MCF 10A (cell line): ENCODE measurements at regions of chr19 and their contacts with region 1.

Region 1: DNA sequence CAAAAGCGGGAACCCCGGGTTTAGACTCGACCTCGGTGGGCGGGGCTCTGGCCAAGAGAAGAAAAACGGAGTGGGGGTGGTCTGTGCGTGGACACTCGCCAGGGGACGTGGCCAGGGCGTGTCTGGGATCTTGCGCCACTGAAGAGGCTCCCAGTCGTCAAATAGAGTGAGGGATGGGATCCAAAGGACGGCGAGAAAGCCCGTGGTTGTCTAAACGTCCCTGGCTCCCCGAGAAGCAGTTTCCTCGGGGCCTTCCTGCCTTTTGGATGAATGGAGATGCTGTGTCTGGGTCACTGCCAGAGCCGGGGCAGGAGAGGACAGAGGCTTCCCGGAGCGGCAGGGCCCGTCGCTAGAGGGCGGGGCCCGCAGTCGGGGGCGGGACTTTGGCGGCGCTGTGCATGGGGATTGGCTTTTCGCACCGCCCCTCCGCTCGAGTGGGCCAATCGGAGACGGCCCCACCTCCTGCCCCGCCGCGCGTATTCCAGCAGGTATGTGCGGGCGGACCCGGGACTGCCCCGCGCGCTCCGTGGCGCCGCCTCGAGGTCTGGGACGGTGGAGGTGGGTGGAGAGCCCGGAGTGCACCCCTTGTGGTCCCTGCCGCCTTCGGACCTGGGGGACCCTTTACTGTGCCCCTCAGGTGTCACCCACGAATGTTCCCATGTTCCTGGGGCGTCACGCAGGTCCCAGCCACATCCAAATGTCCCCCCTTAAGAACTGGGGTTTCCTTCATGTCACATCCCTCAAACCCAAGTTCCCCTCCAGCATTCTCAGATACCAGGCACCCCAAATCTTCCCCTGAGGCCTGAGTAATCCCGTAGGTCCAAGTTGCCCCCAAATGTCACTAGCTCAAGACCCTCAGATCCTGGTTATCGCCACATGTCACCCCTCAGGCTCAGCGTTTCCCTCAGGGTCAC is 38.3 kb downstream of the ZSWIM4 start:
- DNase-seq: peak; percentile 94
- H3K4me3 Mint-ChIP-seq: peak overlapping the region; percentile 46
- H3K27ac Mint-ChIP-seq: peak overlapping the region; percentile 75
- H3K4me1 Mint-ChIP-seq: peaks cover 7% of the 10 kb centered on the region
- H3K27me3 Mint-ChIP-seq: no peaks in the 10 kb centered on the region
- CTCF ChIP-seq: peak; percentile 29

Region 2: GRCh38 chr19:13819238-13819637 is 14.3 kb before region 1 on chr19:
- CTCF ChIA-PET with region 1: interaction called, 4 read pairs
- POLR2A ChIA-PET with region 1: interaction called, 10 read pairs
- intact Hi-C with region 1: no loop called
- DNase-seq: no peak
- H3K4me3 Mint-ChIP-seq: no peak overlapping the region
- H3K27ac Mint-ChIP-seq: no peak overlapping the region
- H3K4me1 Mint-ChIP-seq: peaks cover 17% of the 10 kb centered on the region
- H3K27me3 Mint-ChIP-seq: no peaks in the 10 kb centered on the region
- CTCF ChIP-seq: no peak

Region 3: GRCh38 chr19:13846557-13847406 is 13.2 kb after region 1 on chr19:
- CTCF ChIA-PET with region 1: interaction called, 3 read pairs
- POLR2A ChIA-PET with region 1: interaction called, 265 read pairs
- intact Hi-C with region 1: no loop called
- DNase-seq: peak; percentile 93
- H3K4me3 Mint-ChIP-seq: peak overlapping the region; percentile 58
- H3K27ac Mint-ChIP-seq: peak overlapping the region; percentile 100
- H3K4me1 Mint-ChIP-seq: peaks cover 30% of the 10 kb centered on the region
- H3K27me3 Mint-ChIP-seq: no peaks in the 10 kb centered on the region
- CTCF ChIP-seq: no peak